ENCODE measurements at regions of chr1 and their contacts with region 1.

Region 1: DNA sequence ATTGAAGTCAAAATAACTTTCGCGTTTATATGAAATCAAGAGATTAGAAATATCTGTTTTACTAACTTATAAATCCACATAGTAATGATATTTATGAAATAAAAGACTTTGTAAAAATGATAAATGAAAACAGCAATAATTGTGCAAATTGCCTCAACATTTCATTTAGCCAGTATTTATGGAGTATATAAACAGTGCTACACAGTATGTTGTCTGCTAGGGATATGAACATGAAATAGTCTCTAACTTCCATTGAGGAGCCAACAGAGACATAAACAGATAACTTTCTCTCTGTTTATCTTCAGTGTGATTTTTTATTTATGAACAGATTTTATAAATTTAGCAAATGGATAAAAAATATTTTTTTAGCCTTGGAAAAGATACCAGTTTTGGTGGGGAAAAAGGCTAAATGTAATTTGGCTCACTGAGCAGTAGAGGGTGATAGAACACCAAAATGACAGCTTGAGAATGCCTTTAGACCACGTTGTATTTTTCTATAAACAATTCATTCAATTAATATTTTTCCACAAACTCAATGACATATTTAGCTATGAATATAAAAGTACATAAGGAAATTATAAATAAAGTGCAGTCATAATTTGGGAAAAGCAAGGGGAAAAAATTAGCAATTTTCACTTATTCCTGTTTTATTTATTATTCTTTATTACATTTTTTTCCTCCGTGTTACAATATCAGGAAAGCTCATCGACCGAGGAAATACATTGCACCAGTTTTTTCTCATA is 47.5 kb upstream of the EEIG2 start:
- DNase-seq: no peak
- ATAC-seq: peak in 3 of 4 donors; percentile 81 to 86 (median 82)
- H3K4me3 ChIP-seq: no peak overlapping the region
- H3K27ac ChIP-seq: no peak overlapping the region
- H3K4me1 ChIP-seq: no peaks in the 10 kb centered on the region
- H3K27me3 ChIP-seq: no peaks in the 10 kb centered on the region
- CTCF ChIP-seq: peak in 3 of 4 donors; percentile 71 to 84 (median 78)

Region 2: DNA sequence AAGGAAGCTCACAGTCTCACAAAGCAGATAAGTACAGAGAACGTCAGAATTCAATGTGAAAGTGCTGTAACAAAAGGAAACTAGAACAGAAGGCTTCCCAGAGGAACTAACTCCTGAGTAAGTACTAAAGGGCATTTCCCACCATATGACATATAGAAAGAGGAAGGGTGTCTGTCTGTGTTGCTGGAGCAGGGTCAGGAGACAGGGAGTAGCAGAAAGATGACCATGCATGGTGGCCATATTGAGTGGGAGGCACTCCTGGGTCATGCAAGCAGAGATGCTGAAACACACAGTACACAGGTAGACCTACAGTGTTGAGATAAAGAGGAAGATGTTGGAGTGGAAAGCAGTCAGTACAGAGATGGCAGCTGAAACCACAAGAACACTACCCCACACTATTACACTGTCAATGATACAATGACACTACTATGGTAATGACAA is 359.6 kb before region 1 on chr1:
- intact Hi-C with region 1: no loop called
- DNase-seq: no peak
- ATAC-seq: peak in 2 of 4 donors; percentile 32 to 66
- H3K4me3 ChIP-seq: no peak overlapping the region
- H3K27ac ChIP-seq: no peak overlapping the region
- H3K4me1 ChIP-seq: no peaks in the 10 kb centered on the region
- H3K27me3 ChIP-seq: no peaks in the 10 kb centered on the region
- CTCF ChIP-seq: no peak

Region 3: GRCh38 chr1:108559215-108560186 is 47.1 kb after region 1 on chr1 and contains the start of gene EEIG2:
- intact Hi-C with region 1: loop called in 1 of 3 experiments (anchors 10 kb)
- DNase-seq: peak; percentile 71 to 97 (median 86)
- ATAC-seq: peak; percentile 91 to 97 (median 94)
- H3K4me3 ChIP-seq: peak within 1 kb of the TSS; percentile 41 to 70 (median 52)
- H3K27ac ChIP-seq: peak within 1 kb of the TSS in 2 of 4 donors; percentile 44 to 58
- H3K4me1 ChIP-seq: peaks cover 0 to 18% (median 5%) of the 10 kb centered on the region in 3 donors
- H3K27me3 ChIP-seq: no peaks in the 10 kb centered on the region
- CTCF ChIP-seq: peak; percentile 76 to 92 (median 78)
- total RNA-seq, gene EEIG2: 2.8 to 13.0 (median 3.3) TPM

Region 4: GRCh38 chr1:108643492-108644335 is 131.3 kb after region 1 on chr1:
- intact Hi-C with region 1: loop called (anchors 5 to 10 kb)
- DNase-seq: peak in 3 of 6 donors; percentile 16 to 49 (median 39)
- ATAC-seq: peak; percentile 68 to 81 (median 70)
- H3K4me3 ChIP-seq: no peak overlapping the region
- H3K27ac ChIP-seq: no peak overlapping the region
- H3K4me1 ChIP-seq: peaks cover 0 to 4% (median 0%) of the 10 kb centered on the region in 3 donors
- H3K27me3 ChIP-seq: no peaks in the 10 kb centered on the region
- CTCF ChIP-seq: peak in 2 of 4 donors; percentile 37 to 53